Activated CD8-positive, alpha-beta T cell treated with anti-CD3 and anti-CD28 coated beads, Interleukin-2, amount 10 ng/mL, durations not matched to agents 7 days and 5 days (primary cell): ENCODE measurements at regions of chr11 and their contacts with region 1.

Region 1: DNA sequence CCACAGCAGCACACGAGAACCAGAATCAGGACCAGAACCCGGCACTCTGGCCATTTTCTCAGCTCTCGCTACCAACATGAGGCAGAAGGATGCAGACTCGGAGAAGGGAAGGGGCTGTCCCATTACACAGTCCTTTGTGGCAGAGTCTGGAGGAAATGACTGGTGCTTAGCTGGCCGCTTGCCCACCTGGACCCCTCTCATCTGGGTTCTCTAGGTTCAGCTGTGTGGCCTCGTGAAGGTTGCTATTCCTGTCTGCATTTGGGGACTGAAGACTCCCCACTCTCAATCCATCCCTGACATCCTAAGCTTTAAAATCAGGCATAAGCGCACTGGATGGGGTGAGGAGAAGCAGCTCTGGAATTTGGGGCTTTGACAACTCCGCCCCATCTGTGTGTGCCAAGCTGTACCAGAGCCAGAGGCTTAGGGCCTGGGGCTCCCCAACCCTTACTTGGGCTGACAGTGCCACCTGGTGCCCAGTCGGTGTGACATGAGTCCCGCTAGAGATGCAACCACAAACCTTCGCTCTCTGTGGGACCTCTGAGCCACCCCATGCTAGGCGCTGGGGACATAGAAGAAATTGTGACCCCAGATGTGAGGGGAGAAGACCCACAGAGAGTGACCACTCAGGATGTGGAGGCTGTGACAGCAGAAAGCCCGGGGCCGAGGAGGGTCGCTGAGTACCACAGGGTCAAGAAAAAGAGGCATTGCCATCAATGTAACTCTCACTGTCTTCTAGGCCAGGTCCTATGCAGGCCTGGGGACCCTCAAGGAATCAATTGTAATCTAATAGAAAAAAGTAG is 35.9 kb upstream of the FCHSD2 start:
- DNase-seq: peak; percentile 88
- ATAC-seq: peak; percentile 99
- H3K4me3 Mint-ChIP-seq: no peak overlapping the region
- H3K27ac Mint-ChIP-seq: peak overlapping the region; percentile 64
- H3K4me1 Mint-ChIP-seq: peaks cover 33% of the 10 kb centered on the region
- H3K27me3 Mint-ChIP-seq: peaks cover 22% of the 10 kb centered on the region

Region 2: DNA sequence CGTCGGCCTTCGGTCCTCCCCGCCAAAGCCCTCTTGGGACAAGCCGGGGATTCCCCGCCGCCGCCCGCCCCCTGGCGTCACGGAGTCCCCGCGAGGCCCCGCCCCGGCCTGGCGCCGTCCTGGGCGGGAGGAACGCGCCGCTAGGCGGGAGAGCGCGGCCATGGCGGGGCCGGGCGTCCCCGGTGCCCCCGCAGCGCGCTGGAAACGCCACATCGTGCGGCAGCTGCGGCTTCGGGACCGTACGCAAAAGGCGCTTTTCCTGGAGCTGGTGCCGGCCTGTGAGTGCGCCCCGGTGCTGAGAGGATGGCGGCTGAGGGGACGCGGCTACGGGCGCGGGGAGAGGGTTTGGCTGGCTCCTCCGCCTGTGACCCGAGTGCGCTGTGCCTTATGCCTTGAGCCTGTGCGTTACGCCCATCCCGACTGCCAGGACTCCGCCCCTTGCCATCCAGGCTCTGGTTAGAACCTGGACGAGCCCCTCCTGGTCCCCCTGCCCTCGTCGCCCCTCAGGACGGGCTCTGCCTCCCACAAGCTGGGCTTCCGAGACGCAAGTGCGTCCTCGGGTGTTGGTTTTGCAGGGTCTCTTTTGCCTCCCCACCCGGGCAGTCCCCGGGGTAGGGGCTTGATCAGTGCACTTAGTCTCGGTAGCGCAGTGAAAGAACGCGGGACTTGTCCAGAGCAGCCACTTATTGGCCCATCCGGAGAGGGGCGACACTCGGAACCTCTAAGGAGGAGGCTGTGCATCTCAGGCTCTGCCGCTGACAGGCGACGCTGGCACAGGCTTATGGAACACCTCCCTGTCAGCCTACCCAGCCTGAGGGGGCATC is 363.5 kb before region 1 on chr11 and contains the start of gene ATG16L2:
- CTCF ChIA-PET with region 1: interaction called, 17 read pairs
- POLR2A ChIA-PET with region 1: interaction called, 3 read pairs
- DNase-seq: peak; percentile 88
- ATAC-seq: peak; percentile 74
- H3K4me3 Mint-ChIP-seq: peak within 1 kb of the TSS; percentile 100
- H3K27ac Mint-ChIP-seq: peak within 1 kb of the TSS; percentile 99
- H3K4me1 Mint-ChIP-seq: peaks cover 50% of the 10 kb centered on the region
- H3K27me3 Mint-ChIP-seq: no peaks in the 10 kb centered on the region
- total RNA-seq, gene ATG16L2: 104 to 105 TPM

Region 3: GRCh38 chr11:72840780-72841179 is 337.2 kb before region 1 on chr11:
- CTCF ChIA-PET with region 1: interaction called, 10 read pairs
- POLR2A ChIA-PET with region 1: no interaction called
- DNase-seq: no peak
- ATAC-seq: no peak
- H3K4me3 Mint-ChIP-seq: no peak overlapping the region
- H3K27ac Mint-ChIP-seq: no peak overlapping the region
- H3K4me1 Mint-ChIP-seq: peaks cover 16% of the 10 kb centered on the region
- H3K27me3 Mint-ChIP-seq: no peaks in the 10 kb centered on the region

Region 4: DNA sequence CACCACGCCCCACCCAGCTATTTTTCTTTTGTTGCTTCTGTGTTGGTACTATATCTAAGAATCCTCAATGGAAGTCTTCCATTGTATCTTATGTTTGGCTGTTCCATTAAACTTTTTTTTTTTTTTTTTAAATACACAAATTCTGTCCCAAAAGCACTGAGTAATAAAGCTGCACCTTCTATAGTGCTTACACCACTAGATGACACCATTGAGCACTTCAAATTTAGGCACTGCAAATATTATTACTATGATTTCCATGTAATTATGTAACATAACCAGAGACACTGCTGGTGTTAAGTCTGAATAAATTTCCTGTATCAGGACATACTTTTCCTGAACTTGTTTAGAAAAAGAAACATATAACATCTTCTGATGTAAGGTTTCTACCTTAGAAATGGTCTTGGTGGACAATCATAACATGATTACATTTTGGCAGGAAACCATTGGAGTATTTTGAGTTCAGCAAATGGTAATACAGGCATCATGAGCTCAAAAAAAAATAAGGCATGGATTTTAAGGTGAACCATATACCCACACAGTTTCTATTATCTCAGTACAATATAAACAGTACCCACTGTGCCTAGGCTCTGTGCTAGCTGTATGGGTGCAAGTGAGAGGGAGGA is 253.3 kb before region 1 on chr11:
- CTCF ChIA-PET with region 1: interaction called, 91 read pairs
- POLR2A ChIA-PET with region 1: no interaction called
- DNase-seq: no peak
- ATAC-seq: no peak
- H3K4me3 Mint-ChIP-seq: no peak overlapping the region
- H3K27ac Mint-ChIP-seq: no peak overlapping the region
- H3K4me1 Mint-ChIP-seq: peaks cover 4% of the 10 kb centered on the region
- H3K27me3 Mint-ChIP-seq: no peaks in the 10 kb centered on the region

Region 5: GRCh38 chr11:73040046-73040445 is 137.9 kb before region 1 on chr11:
- CTCF ChIA-PET with region 1: no interaction called
- POLR2A ChIA-PET with region 1: no interaction called
- DNase-seq: no peak
- ATAC-seq: no peak
- H3K4me3 Mint-ChIP-seq: no peak overlapping the region
- H3K27ac Mint-ChIP-seq: no peak overlapping the region
- H3K4me1 Mint-ChIP-seq: peaks cover 3% of the 10 kb centered on the region
- H3K27me3 Mint-ChIP-seq: no peaks in the 10 kb centered on the region

Region 6: DNA sequence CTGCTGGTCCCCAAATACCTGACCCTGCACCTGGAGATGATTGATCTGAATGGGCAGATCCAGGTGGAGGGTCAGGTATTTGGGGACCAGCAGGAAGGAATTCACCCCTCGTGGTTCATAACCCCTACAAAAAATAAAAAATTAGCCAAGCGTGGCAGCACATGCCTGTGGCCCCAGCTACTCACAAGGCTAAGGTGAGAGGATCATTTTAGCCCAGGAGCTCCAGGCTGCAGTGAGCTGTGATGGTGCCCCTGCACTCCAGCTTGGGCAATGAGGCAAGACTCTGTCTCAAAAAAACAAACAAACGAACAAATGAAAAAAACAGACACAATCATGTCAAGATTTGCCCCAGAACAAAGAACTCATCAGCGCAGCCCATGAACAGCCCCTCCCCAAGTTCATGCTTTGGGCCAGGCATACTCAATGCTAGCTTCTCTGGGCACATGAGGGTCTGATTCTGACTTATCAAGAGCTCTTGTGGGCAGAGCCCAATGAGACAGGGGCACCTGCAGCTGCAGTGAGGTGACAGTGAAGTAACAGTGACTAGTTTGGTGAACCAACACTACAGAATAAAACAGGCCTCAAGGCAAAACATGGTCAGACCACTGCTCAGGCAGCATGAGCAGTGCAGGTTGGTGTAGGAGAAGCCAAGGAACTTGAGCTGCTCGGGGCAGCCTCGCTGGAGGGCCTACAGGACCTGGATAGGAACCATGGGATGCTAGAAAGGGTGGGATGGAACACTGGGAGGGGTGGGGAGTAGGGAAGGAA is 25.7 kb before region 1 on chr11:
- CTCF ChIA-PET with region 1: interaction called, 38 read pairs
- POLR2A ChIA-PET with region 1: interaction called, 7 read pairs
- DNase-seq: no peak
- ATAC-seq: no peak
- H3K4me3 Mint-ChIP-seq: no peak overlapping the region
- H3K27ac Mint-ChIP-seq: peak overlapping the region; percentile 92
- H3K4me1 Mint-ChIP-seq: peaks cover 96% of the 10 kb centered on the region
- H3K27me3 Mint-ChIP-seq: no peaks in the 10 kb centered on the region

Region 7: DNA sequence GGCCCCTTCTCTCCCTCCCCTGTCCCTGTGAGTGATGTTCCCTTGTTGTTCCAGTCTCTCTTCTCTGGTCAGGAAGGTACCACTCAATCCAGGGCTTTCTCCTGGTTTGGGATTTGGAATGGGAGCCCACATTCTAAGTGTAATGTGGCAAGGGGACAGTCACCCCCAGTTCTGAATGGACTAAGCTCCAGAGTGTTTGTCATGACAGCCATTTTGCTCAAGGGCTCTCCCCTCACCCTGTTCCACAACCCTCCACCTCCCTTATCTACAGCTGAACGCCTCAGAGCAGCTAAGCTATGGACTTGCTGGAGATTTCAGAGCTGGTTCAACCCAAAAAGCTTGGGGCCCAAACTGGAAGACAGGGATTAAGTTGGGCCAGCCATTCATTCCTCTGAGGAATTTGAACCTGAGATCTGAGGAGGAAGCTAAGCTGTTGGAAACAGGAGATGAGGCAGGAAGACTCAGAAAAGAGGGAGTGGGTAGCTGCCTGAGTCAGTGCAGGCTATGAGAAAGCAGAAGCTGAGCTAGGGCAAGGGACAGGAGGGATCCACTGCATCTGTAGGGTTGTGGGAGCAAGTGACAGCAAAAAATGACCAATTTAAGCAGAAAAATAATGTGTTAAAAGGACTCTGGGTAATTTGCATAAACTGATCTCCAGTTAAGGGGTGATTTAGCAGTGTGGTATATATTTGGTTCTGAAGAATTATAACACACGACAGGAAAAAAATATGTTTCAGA is 13.0 kb before region 1 on chr11:
- CTCF ChIA-PET with region 1: interaction called, 38 read pairs
- POLR2A ChIA-PET with region 1: interaction called, 7 read pairs
- DNase-seq: no peak
- ATAC-seq: no peak
- H3K4me3 Mint-ChIP-seq: no peak overlapping the region
- H3K27ac Mint-ChIP-seq: peak overlapping the region; percentile 16
- H3K4me1 Mint-ChIP-seq: peaks cover 10% of the 10 kb centered on the region
- H3K27me3 Mint-ChIP-seq: peaks cover 5% of the 10 kb centered on the region